ENCODE measurements at regions of chr12 and their contacts with region 1.

Region 1: DNA sequence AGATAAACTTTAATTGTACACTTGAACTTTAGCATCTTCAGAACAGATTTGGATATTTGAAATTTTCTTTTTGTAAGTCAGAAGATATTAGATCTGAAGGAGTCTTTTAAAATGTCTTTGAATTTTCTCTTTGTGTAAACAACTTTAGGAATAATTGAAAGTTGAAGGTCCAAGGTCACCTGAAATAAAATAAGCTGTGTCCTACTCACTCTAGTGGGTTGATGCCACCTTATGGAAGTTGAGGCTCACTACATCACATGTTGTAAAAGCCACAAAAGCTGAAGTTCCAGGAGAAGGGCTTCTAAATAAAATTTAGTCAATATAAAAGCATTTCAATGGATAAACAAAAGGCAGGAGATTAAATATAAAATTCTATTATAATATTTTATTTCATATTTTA is 122.0 kb upstream of the ATXN7L3B start:
- DNase-seq: peak in 3 of 4 experiments; percentile 15 to 37 (median 29)
- ATAC-seq: peak; percentile 73
- H3K4me3 ChIP-seq: no peak overlapping the region
- H3K27ac ChIP-seq: no peak overlapping the region
- H3K4me1 ChIP-seq: no peaks in the 10 kb centered on the region
- H3K27me3 ChIP-seq: no peaks in the 10 kb centered on the region
- CTCF ChIP-seq: peak; percentile 42 to 49 (median 46); a peak in 5 of 6 replicates
- EP300 ChIP-seq: no peak
- POLR2A ChIP-seq: no peak
- RAD21 ChIP-seq: peak; percentile 38 to 64; a peak in 3 of 4 replicates

Region 2: GRCh38 chr12:74111688-74112360 is 303.8 kb before region 1 on chr12:
- CTCF ChIA-PET with region 1: interaction called, 8 read pairs
- POLR2A ChIA-PET with region 1: interaction called, 3 read pairs
- in situ Hi-C with region 1: no loop called
- intact Hi-C with region 1: loop called (anchors 1 kb)
- DNase-seq: peak in 2 of 4 experiments; percentile 7 to 67
- ATAC-seq: peak; percentile 96
- H3K4me3 ChIP-seq: no peak overlapping the region
- H3K27ac ChIP-seq: no peak overlapping the region
- H3K4me1 ChIP-seq: no peaks in the 10 kb centered on the region
- H3K27me3 ChIP-seq: no peaks in the 10 kb centered on the region
- CTCF ChIP-seq: peak; percentile 68 to 80 (median 71)
- EP300 ChIP-seq: no peak
- POLR2A ChIP-seq: no peak
- RAD21 ChIP-seq: peak; percentile 62 to 84

Region 3: GRCh38 chr12:74449872-74450271 is 34.2 kb after region 1 on chr12:
- CTCF ChIA-PET with region 1: no interaction called
- POLR2A ChIA-PET with region 1: no interaction called
- in situ Hi-C with region 1: no loop called
- intact Hi-C with region 1: no loop called
- DNase-seq: no peak
- ATAC-seq: no peak
- H3K4me3 ChIP-seq: no peak overlapping the region
- H3K27ac ChIP-seq: no peak overlapping the region
- H3K4me1 ChIP-seq: no peaks in the 10 kb centered on the region
- H3K27me3 ChIP-seq: no peaks in the 10 kb centered on the region
- CTCF ChIP-seq: no peak
- EP300 ChIP-seq: no peak
- POLR2A ChIP-seq: no peak
- RAD21 ChIP-seq: no peak

Region 4: DNA sequence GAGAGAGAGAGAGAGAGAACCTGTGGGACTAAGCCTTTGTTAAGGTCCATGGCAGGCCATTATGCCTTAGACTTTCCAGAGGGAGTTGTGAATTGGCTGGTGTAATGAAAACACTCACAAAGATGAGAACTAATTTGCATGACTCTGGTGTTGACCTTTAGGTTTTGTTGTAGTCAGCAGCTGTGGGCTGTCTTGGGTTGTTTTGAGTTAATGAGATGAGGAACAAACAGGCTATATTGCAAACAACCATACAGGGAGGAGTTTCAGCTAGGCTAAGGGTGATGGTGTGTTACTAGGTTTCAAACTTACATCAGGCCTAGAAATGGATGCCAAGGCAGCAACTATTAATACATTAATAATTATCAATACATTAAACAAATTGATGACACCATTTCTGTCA is 148.3 kb after region 1 on chr12:
- CTCF ChIA-PET with region 1: no interaction called
- POLR2A ChIA-PET with region 1: no interaction called
- in situ Hi-C with region 1: no loop called
- intact Hi-C with region 1: no loop called
- DNase-seq: no peak
- ATAC-seq: no peak
- H3K4me3 ChIP-seq: no peak overlapping the region
- H3K27ac ChIP-seq: no peak overlapping the region
- H3K4me1 ChIP-seq: no peaks in the 10 kb centered on the region
- H3K27me3 ChIP-seq: no peaks in the 10 kb centered on the region
- CTCF ChIP-seq: no peak
- EP300 ChIP-seq: no peak
- POLR2A ChIP-seq: no peak
- RAD21 ChIP-seq: no peak

Region 5: DNA sequence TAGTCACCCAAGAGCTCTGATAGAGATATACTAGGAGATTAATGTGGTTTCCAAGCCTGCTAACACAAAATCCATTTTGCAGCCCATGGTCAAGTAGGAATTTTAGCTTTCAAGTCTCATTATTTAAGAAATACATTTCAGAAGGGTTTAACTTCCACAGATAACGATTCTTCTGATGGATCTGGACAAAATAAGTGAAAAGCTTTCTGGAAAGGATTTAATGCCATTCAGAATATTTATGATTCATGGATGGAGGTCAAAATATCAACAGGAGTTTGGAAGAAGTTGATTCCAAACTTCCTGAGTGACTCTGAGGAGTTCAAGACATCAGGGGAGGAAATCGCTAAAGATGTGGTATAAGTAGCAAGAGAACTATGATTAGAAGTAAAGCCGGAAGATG is 336.6 kb after region 1 on chr12:
- CTCF ChIA-PET with region 1: no interaction called
- POLR2A ChIA-PET with region 1: no interaction called
- in situ Hi-C with region 1: no loop called
- intact Hi-C with region 1: no loop called
- DNase-seq: no peak
- ATAC-seq: no peak
- H3K4me3 ChIP-seq: no peak overlapping the region
- H3K27ac ChIP-seq: no peak overlapping the region
- H3K4me1 ChIP-seq: no peaks in the 10 kb centered on the region
- H3K27me3 ChIP-seq: no peaks in the 10 kb centered on the region
- CTCF ChIP-seq: no peak
- EP300 ChIP-seq: no peak
- POLR2A ChIP-seq: no peak
- RAD21 ChIP-seq: no peak

Region 6: GRCh38 chr12:74999474-74999873 is 583.8 kb after region 1 on chr12:
- CTCF ChIA-PET with region 1: no interaction called
- POLR2A ChIA-PET with region 1: no interaction called
- in situ Hi-C with region 1: no loop called
- intact Hi-C with region 1: no loop called
- DNase-seq: no peak
- ATAC-seq: no peak
- H3K4me3 ChIP-seq: no peak overlapping the region
- H3K27ac ChIP-seq: no peak overlapping the region
- H3K4me1 ChIP-seq: no peaks in the 10 kb centered on the region
- H3K27me3 ChIP-seq: no peaks in the 10 kb centered on the region
- CTCF ChIP-seq: no peak
- EP300 ChIP-seq: no peak
- POLR2A ChIP-seq: no peak
- RAD21 ChIP-seq: no peak

Measured in K562 (cell line).